Psoas muscle (tissue), 8 donors: ENCODE measurements at regions of chr10 and their contacts with region 1.

Region 1: DNA sequence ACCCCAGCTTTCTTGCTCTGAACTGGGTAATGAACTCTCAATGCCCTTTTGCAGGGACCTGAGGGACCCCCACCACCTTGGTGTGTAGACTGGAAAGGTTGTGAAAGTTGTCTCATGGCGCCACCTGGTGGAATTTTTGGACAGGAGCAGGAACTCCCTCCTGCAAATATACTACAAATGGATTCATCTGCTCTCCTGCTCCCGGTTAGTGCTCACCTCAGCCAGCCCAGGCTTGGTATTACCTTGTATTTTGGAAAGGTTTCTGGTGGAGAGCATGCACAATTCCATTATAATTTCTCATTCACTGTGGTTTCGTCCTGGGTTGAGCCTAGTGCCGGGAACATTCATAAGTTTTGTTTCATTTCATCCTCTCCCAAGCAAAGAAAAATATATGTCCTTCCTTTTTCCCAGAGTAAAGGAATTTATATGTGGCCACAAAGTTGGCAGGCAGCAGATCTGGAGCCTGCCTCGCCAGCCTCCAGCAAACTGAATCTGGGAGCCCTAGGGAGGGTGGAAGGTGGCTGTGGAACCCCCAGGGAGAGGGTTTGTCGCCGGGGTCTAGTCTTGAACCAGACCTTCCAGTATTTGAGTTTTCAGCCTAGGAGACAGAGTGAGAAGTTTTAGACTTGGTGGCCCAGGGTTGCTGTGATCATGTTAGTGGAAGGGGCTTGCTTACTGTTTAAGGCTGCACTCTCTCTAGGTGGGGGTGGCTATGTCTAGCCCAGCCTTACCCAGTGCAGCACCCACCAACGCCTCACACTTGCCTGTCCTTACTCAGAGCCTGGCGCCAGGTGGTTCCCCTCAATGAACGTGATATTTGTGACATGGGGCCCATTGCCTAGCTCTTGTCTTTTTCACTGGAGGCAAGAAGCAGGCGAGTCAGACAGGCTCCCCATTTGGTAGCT is 9.5 kb downstream of the FAM241B start:
- DNase-seq: peak; percentile 41 to 67
- ATAC-seq: peak; percentile 63 to 81 (median 69)
- H3K4me3 ChIP-seq: no peak overlapping the region
- H3K27ac ChIP-seq: no peak overlapping the region
- H3K4me1 ChIP-seq: no peaks in the 10 kb centered on the region
- H3K27me3 ChIP-seq: peaks cover 0 to 1% (median 0%) of the 10 kb centered on the region in 3 donors
- CTCF ChIP-seq: peak; percentile 81

Region 2: GRCh38 chr10:69408318-69409175 is 231.0 kb before region 1 on chr10:
- intact Hi-C with region 1: loop called in 1 of 2 experiments (anchors 5 kb)
- DNase-seq: peak; percentile 94 to 98
- ATAC-seq: peak; percentile 84 to 89 (median 88)
- H3K4me3 ChIP-seq: peak overlapping the region; percentile 58
- H3K27ac ChIP-seq: peak overlapping the region; percentile 92
- H3K4me1 ChIP-seq: peaks cover 21% of the 10 kb centered on the region
- H3K27me3 ChIP-seq: no peaks in the 10 kb centered on the region
- CTCF ChIP-seq: peak; percentile 84

Region 3: GRCh38 chr10:69418052-69418752 is 221.3 kb before region 1 on chr10:
- intact Hi-C with region 1: loop called (anchors 5 kb)
- DNase-seq: peak in 1 of 2 donors; percentile 14
- ATAC-seq: no peak
- H3K4me3 ChIP-seq: no peak overlapping the region
- H3K27ac ChIP-seq: no peak overlapping the region
- H3K4me1 ChIP-seq: peaks cover 11% of the 10 kb centered on the region
- H3K27me3 ChIP-seq: no peaks in the 10 kb centered on the region
- CTCF ChIP-seq: no peak

Region 4: DNA sequence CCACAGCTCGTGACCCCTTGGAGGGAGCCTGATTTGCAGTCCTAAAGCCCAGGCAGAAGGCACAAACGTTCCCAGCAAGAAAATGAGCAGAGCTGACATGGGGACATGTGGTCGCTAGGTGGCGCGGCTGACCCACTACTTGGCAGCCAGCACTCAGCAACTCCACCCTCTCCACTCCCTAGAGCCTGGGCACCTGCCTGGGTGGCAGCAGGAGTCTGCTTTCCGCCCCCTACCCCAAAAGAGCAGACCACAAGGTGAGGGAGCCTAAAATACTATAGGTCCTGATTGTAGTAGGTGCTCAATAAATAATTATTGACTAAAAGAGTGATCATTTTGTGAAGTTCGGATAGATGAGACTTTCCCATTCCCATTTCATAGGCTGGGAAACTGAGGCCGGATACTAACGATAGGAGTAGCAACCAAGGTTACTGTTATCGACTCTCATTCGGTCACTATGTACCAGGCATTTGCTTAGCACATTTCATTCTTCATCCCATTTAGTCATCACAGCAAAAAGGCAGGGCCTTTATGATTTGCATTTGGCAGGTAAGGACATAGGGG is 123.8 kb before region 1 on chr10:
- intact Hi-C with region 1: loop called (anchors 2 kb)
- DNase-seq: peak in 1 of 2 donors; percentile 66
- ATAC-seq: peak; percentile 75 to 83 (median 83)
- H3K4me3 ChIP-seq: no peak overlapping the region
- H3K27ac ChIP-seq: no peak overlapping the region
- H3K4me1 ChIP-seq: no peaks in the 10 kb centered on the region
- H3K27me3 ChIP-seq: no peaks in the 10 kb centered on the region
- CTCF ChIP-seq: peak; percentile 58

Region 5: DNA sequence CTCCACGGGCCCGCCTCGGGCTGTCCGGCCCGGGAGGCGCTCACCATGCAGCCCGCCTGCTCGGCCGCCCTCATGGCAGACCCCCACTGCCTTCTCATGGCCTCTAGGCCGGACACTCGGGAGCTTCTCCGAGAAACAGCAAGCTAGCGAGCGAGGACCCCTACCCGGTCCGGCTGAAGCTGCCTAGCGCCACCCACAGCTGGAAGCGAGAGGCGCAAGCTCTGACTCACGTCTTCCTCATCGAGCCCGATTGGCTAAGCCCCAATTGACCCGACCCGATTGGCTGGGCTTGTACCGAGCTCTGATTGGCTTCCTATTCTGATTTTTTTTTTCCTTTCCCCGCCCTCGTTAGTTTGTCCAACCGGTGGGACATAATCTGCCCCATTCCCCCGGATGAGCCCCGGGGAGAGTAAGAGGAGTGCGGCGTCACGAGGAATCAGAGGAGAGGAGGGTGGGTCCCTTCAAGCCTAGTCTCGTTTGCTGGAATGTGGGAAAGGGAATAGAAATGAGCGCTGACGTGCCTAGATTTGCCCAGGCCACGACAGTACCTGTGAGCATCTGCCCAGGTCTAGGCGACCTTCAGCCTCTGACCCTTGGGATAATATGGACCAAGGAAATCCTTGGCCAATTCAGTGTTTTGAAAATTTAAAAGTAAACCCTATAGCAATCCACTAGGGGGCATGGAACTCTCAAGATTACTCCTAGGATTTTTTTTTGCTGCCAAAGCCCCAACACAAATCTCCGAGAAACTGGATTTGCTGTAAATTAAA is 507.1 kb after region 1 on chr10 and contains the start of gene TYSND1:
- intact Hi-C with region 1: no loop called
- DNase-seq: peak; percentile 97 to 98
- ATAC-seq: peak; percentile 93 to 96 (median 94)
- H3K4me3 ChIP-seq: peak within 1 kb of the TSS; percentile 82
- H3K27ac ChIP-seq: peak within 1 kb of the TSS; percentile 90
- H3K4me1 ChIP-seq: peaks cover 7% of the 10 kb centered on the region
- H3K27me3 ChIP-seq: no peaks in the 10 kb centered on the region
- CTCF ChIP-seq: peak; percentile 68
- total RNA-seq, gene TYSND1: 2.4 to 4.7 (median 3.7) TPM